HEK293T (cell line): ENCODE measurements at regions of chr12 and their contacts with region 1.

Region 1: GRCh38 chr12:49296034-49296835 is 1.3 kb downstream of the PRPH start:
- DNase-seq: peak; percentile 88

Region 2: GRCh38 chr12:49279706-49280159 is 16.5 kb before region 1 on chr12:
- CTCF ChIA-PET with region 1: interaction called, 12 read pairs
- POLR2A ChIA-PET with region 1: interaction called, 4 read pairs
- DNase-seq: no peak

Region 3: DNA sequence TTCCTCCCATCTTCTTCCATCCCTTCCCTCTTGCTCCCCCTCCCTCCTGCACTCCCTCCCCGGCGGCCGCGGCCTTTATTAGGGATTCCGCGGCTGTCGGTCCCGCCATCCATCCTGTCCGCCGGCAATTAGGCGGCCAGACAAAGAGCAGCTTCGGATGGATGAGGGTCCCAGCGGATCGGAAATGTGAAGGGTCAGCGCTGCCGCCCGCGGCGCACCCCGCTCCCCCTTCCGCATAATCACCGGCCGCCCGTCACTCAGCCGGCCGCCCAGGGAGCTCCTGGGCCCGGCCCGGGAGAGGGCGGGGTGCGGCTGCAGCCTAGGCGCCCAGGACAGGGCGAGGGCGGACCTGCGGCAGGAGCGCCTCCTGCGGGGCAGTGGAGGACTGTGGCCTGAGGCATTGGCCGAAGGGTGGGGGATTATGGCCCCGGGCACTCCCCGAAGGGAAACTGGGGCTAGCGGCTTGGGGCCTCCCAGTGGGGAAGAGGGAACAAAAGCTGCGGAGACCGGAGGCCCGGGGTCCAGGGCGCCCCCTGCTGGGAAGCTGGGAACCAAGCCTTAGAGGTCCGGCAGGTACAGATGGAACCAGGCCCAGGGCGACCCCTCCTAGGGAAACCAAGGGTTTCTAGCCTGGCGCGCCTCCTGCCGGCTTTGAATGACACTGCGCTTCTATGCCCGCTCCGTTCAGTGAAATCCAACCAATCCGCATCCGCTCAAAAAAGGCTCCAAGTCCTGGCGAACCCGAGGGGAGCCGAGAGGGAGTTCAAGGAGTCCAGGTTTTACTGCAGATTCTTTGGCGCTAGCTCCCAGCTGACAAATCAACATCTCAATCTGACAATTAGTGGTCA is 46.1 kb after region 1 on chr12:
- CTCF ChIA-PET with region 1: interaction called, 34 read pairs
- POLR2A ChIA-PET with region 1: interaction called, 13 read pairs
- DNase-seq: peak; percentile 88

Region 4: DNA sequence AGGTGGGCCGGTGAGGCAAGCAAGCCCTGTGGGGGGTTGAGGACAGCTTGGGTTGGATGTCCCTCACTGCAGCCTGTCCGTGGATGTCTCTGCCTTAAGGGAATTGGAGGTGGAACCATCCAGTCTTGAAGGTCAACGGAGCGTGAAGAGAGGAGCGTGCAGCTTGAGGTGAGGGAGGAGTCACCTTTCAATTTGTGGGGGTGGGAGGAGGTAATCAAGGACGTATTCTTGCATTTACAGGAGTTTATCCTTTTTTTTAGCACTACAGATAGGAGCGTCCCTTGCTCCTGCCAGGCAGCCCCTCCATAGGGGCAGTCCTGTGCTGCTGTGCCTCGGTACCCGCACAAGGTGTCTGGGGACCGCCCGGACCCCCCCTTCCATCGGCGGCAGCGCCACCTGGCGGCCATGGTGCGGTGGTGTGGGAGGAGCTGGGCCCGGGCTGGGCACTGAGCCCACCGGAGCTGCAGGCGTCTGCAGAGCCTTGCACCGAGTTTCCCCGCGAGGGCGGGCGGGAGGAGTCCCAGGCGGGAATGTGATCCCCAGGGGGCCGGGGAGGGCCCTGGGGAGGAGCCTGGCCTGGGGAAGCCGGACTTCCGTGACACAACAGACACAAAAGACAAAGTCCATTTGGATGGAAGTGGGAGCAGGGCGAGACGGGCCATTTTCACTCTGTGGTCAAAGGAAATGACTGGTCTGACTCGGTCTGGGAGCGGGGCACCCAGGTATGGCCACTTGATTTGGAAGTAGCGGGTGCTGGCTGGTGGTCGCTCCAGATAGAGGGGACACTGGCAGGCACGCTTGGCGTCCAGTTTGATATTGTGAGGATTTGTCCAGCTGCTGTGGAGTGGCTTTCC is 51.4 kb after region 1 on chr12:
- CTCF ChIA-PET with region 1: interaction called, 34 read pairs
- POLR2A ChIA-PET with region 1: interaction called, 13 read pairs
- DNase-seq: peak; percentile 89